Activated T-helper 2 cell treated with anti-CD3 and anti-CD28 coated beads, Interferon-gamma antibody, Interleukin-2, Interleukin-4, amounts not matched to agents 10 μg/mL and 5 μg/mL and 100 μg/mL, durations not matched to agents 14 hours and 24 hours and 36 hours (primary cell): ENCODE measurements at regions of chr11 and their contacts with region 1.

Region 1: DNA sequence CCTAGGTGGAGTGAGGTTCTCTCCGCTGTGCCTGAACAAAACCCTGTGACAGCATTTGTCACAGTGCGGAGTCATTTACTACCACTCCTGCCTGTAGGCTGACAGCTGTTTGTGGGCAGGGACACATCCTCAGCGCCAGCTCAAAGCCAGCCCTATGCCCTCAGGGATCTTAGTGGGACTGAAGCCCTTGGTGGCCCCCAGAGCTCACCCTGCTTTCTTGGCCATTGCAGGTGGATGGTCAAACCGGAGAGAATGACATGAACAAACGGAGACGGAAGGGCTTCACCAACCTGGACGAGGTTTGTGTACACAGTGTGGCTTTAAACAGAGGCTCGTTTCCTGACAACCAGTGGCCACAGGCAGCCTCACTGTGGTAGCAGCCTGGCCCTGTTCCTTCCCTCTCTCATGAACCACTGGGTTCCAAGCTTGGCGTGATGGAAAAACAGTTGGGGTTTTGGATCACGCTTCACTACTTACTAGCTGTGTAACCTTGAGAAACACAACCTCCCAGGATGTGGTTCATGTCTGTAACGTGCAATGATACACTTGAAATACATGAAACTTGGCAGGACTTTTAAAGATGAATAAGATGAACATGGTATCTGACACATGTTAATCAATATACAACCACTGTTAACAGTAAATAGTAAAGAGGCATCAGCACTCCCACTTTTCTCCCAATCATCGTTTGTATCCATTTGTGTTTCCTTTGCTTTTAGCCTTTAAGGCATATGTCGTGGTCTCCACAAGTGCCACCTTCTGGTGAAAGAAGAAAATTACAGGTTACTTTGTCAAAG is 125.8 kb downstream of the MICAL2 start:
- DNase-seq: peak; percentile 67
- H3K4me3 Mint-ChIP-seq: peak overlapping the region; percentile 33
- H3K27ac Mint-ChIP-seq: peak overlapping the region; percentile 96
- H3K4me1 Mint-ChIP-seq: peaks cover 57% of the 10 kb centered on the region
- H3K27me3 Mint-ChIP-seq: no peaks in the 10 kb centered on the region

Region 2: GRCh38 chr11:12043959-12044819 is 192.0 kb before region 1 on chr11:
- intact Hi-C with region 1: loop called (anchors 1 kb)
- DNase-seq: peak; percentile 35
- H3K4me3 Mint-ChIP-seq: no peak overlapping the region
- H3K27ac Mint-ChIP-seq: no peak overlapping the region
- H3K4me1 Mint-ChIP-seq: peaks cover 18% of the 10 kb centered on the region
- H3K27me3 Mint-ChIP-seq: peaks cover 12% of the 10 kb centered on the region

Region 3: GRCh38 chr11:12110201-12110713 is 125.9 kb before region 1 on chr11 and contains the start of gene MICAL2:
- intact Hi-C with region 1: loop called (anchors 1 kb)
- DNase-seq: peak; percentile 88
- H3K4me3 Mint-ChIP-seq: peak within 1 kb of the TSS; percentile 90
- H3K27ac Mint-ChIP-seq: peak within 1 kb of the TSS; percentile 99
- H3K4me1 Mint-ChIP-seq: peaks cover 60% of the 10 kb centered on the region
- H3K27me3 Mint-ChIP-seq: no peaks in the 10 kb centered on the region
- total RNA-seq, gene MICAL2: 736 TPM in 2 replicates

Region 4: GRCh38 chr11:12174477-12175143 is 61.5 kb before region 1 on chr11:
- intact Hi-C with region 1: loop called (anchors 1 kb)
- DNase-seq: no peak
- H3K4me3 Mint-ChIP-seq: peak overlapping the region; percentile 73
- H3K27ac Mint-ChIP-seq: peak overlapping the region; percentile 98
- H3K4me1 Mint-ChIP-seq: peaks cover 73% of the 10 kb centered on the region
- H3K27me3 Mint-ChIP-seq: no peaks in the 10 kb centered on the region

Region 5: DNA sequence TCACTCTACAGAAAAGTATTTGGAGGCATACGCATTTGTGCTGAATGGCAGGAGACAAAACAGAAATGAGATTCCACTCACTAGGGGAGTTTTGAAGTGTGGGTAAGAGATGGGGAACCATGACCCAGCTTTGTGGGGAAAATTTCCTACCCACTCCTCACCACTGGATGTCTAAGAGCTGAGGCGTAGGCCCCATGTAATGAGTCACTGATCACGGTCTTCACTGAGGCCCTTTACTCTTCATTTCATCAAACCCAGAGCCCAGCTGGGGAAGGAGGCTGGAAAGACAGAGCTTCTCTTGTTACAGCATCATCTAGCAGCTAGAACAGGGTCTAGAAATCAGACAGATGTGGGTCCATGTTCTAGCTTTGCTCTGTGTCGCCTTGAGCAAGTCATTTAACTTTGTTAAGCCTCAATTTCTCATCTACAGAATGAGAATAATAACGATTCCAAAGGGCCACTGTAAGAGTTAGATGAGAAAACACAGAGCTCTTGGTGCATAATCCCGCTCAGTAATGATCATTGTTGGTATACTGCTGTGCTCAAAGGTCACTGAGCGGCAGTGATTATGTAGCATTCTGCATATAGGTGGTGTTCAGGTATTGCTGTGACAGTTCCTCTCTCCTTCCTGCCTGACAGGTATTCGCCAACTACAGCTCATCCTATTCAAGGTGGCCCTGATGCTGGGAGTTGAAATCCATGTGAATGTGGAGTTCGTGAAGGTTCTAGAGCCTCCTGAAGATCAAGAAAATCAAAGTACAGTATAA is 28.6 kb before region 1 on chr11:
- intact Hi-C with region 1: loop called (anchors 1 kb)
- DNase-seq: no peak
- H3K4me3 Mint-ChIP-seq: peak overlapping the region; percentile 59
- H3K27ac Mint-ChIP-seq: peak overlapping the region; percentile 89
- H3K4me1 Mint-ChIP-seq: peaks cover 74% of the 10 kb centered on the region
- H3K27me3 Mint-ChIP-seq: no peaks in the 10 kb centered on the region

Region 6: DNA sequence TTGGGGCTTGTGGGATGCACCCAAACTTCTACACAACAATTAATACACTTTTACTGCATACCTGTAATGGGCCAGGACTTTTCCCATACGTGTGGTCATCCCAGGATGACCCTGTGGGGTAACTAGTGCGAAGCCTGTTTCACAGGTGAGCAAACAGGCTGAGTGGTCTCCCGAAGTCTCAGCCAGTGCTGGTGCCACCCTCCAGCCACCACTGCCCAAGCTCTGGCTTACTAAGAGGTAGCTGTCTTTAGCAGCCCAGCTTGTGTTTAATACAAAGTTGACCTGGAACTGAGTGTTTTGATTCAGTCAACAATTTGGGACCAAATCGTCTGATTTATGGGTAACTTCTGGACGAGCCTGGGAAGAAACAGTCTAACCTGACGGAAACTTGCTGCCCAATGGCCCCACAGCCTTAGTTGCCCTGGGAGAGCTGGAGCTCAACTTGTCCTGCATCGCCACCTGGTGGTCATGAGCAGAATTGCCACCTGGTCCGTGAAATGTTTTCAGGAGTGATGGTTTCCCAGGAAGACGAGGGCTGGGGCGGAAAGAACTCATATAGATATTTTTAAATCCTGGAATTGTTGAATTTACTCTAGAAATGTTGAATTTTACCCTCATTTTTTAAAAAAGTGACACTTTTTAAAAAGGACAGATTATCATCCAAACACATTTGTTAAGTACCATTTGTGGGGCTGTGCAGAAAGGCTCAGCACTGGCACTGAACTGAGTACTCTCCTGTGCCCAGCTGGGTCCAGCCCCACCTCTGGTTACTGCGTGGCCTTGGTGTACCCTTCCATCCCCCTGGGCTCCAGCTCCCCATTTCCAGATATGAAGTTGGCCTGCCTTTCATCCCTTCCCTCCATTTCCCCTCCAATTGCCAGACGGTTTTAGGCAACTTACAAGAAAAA is 45.7 kb after region 1 on chr11:
- intact Hi-C with region 1: loop called (anchors 5 kb)
- DNase-seq: peak; percentile 60
- H3K4me3 Mint-ChIP-seq: no peak overlapping the region
- H3K27ac Mint-ChIP-seq: peak overlapping the region; percentile 74
- H3K4me1 Mint-ChIP-seq: peaks cover 20% of the 10 kb centered on the region
- H3K27me3 Mint-ChIP-seq: no peaks in the 10 kb centered on the region

Region 7: DNA sequence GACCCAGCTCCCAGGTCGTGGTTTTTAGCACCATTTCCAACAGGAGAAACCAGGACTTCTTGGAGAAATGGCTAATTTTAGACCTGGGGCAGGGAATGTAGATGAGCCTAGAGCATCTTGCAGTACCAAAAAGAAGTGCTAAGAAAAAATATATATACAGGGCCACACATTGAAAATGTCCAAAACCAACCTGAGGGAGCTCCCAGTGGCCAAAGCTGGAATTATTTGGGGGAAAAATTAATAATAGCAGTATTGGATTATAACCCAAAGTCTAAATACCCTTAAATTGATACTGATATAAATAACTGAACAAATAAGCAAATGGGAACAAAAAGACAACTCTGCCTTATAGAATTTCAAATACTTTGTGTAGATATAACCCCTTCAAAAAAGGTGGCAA is 249.2 kb after region 1 on chr11:
- intact Hi-C with region 1: no loop called
- DNase-seq: no peak
- H3K4me3 Mint-ChIP-seq: no peak overlapping the region
- H3K27ac Mint-ChIP-seq: no peak overlapping the region
- H3K4me1 Mint-ChIP-seq: no peaks in the 10 kb centered on the region
- H3K27me3 Mint-ChIP-seq: no peaks in the 10 kb centered on the region